T-cell (primary cell): ENCODE measurements at regions of chr16 and their contacts with region 1.

Region 1: GRCh38 chr16:71412270-71413160 is 29.3 kb downstream of the TLE7 start:
- DNase-seq: peak in 34 of 35 experiments; percentile 16 to 82 (median 53)
- ATAC-seq: peak; percentile 62 to 78 (median 69)
- H3K4me3 ChIP-seq: no peak overlapping the region
- H3K4me3 Mint-ChIP-seq: no peak overlapping the region
- H3K27ac ChIP-seq: no peak overlapping the region
- H3K27ac Mint-ChIP-seq: no peak overlapping the region
- H3K4me1 ChIP-seq: peaks cover 0 to 8% of the 10 kb centered on the region in 2 experiments
- H3K4me1 Mint-ChIP-seq: peaks cover 7 to 17% (median 10%) of the 10 kb centered on the region in 3 donors
- H3K27me3 ChIP-seq: peaks cover 0 to 46% of the 10 kb centered on the region in 2 experiments
- H3K27me3 Mint-ChIP-seq: peaks cover 39 to 47% of the 10 kb centered on the region in 2 donors

Region 2: GRCh38 chr16:70714581-70715054 is 697.9 kb before region 1 on chr16:
- CTCF ChIA-PET with region 1: interaction called in 1 of 2 experiments, 10 read pairs
- POLR2A ChIA-PET with region 1: no interaction called
- DNase-seq: no peak
- ATAC-seq: no peak
- H3K4me3 ChIP-seq: no peak overlapping the region
- H3K4me3 Mint-ChIP-seq: no peak overlapping the region
- H3K27ac ChIP-seq: no peak overlapping the region
- H3K27ac Mint-ChIP-seq: no peak overlapping the region
- H3K4me1 ChIP-seq: peaks cover 0 to 6% of the 10 kb centered on the region in 2 experiments
- H3K4me1 Mint-ChIP-seq: no peaks in the 10 kb centered on the region
- H3K27me3 ChIP-seq: no peaks in the 10 kb centered on the region
- H3K27me3 Mint-ChIP-seq: no peaks in the 10 kb centered on the region

Region 3: DNA sequence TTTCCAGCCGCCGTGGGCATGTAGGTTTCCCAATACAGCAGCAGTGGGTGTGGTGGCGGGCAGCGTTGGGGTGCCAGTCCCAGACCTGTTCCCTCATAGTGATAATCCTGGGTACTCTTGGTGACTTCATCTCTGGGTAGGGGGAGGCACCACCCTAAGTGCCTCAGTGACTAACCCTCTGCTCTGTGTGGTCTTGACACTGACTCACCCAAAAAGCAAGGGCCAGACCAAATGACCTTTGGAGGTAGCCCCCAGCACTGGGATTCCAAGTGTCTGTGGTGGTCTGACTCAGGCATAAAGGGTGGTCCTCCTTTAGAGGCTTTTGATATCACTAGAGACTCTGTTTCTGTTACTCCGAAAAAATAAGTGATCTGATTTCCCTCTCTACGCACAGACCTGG is 53.1 kb before region 1 on chr16:
- CTCF ChIA-PET with region 1: interaction called in 1 of 2 experiments, 10 read pairs
- POLR2A ChIA-PET with region 1: no interaction called
- DNase-seq: no peak
- ATAC-seq: no peak
- H3K4me3 ChIP-seq: no peak overlapping the region
- H3K4me3 Mint-ChIP-seq: no peak overlapping the region
- H3K27ac ChIP-seq: no peak overlapping the region
- H3K27ac Mint-ChIP-seq: no peak overlapping the region
- H3K4me1 ChIP-seq: peaks cover 0 to 12% of the 10 kb centered on the region in 2 experiments
- H3K4me1 Mint-ChIP-seq: peaks cover 0 to 5% (median 0%) of the 10 kb centered on the region in 3 donors
- H3K27me3 ChIP-seq: peaks cover 10 to 44% of the 10 kb centered on the region in 2 experiments
- H3K27me3 Mint-ChIP-seq: peaks cover 29 to 43% of the 10 kb centered on the region in 2 donors

Region 4: GRCh38 chr16:71499775-71500364 is 87.4 kb after region 1 on chr16:
- CTCF ChIA-PET with region 1: interaction called, 20 to 73 read pairs
- POLR2A ChIA-PET with region 1: no interaction called
- DNase-seq: peak in 32 of 35 experiments; percentile 2 to 81 (median 34)
- ATAC-seq: peak in 3 of 4 experiments; percentile 65 to 73 (median 67)
- H3K4me3 ChIP-seq: no peak overlapping the region
- H3K4me3 Mint-ChIP-seq: no peak overlapping the region
- H3K27ac ChIP-seq: no peak overlapping the region
- H3K27ac Mint-ChIP-seq: no peak overlapping the region
- H3K4me1 ChIP-seq: no peaks in the 10 kb centered on the region
- H3K4me1 Mint-ChIP-seq: no peaks in the 10 kb centered on the region
- H3K27me3 ChIP-seq: peaks cover 4 to 7% of the 10 kb centered on the region in 2 experiments
- H3K27me3 Mint-ChIP-seq: peaks cover 8 to 10% of the 10 kb centered on the region in 2 donors